PC-9 (cell line): ENCODE measurements at regions of chr14 and their contacts with region 1.

Region 1: DNA sequence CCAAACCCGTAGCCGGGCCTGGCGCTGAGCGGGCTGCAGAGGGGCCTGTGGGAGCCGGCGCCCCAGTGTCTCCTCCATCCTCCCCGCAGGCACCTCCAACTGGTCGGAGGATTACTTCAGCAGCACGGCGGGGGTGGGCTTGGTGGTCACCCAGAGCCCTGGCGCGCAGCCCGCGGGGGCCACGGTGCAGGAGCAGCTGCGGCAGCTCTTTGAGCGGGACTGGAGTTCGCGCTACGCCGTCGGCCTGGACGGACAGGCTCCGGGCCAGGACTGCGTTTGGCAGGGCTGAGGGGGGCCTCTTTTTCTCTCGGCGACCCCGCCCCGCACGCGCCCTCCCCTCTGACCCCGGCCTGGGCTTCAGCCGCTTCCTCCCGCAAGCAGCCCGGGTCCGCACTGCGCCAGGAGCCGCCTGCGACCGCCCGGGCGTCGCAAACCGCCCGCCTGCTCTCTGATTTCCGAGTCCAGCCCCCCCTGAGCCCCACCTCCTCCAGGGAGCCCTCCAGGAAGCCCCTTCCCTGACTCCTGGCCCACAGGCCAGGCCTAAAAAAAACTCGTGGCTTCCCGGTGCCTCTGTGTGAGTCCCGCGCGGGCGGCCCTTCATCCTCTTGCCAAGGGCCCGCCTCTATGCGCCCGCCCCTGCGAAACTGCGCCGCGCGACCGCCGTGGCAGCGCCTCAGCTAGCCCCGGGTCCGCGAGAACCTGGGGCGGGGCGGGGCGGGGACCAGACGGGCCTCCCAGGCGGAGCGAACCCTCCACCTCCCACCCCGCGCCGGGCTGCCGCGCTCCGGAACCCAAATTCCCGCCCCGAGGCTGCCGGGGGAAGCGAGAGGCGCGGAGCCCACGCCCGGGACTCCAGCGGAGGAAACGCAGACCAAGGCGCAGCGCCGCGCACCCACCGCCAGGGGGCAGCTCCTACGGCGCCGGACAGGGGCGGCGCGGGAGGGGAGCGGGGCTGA is 8.3 kb downstream of the PLD4 start:
- DNase-seq: peak; percentile 38 to 77
- H3K4me3 ChIP-seq: peak overlapping the region; percentile 71
- H3K27ac ChIP-seq: no peak overlapping the region
- H3K4me1 ChIP-seq: no peaks in the 10 kb centered on the region
- H3K27me3 ChIP-seq: peaks cover 21% of the 10 kb centered on the region; the same call in 1 of the 2 replicates
- CTCF ChIP-seq: peak; percentile 69

Region 2: DNA sequence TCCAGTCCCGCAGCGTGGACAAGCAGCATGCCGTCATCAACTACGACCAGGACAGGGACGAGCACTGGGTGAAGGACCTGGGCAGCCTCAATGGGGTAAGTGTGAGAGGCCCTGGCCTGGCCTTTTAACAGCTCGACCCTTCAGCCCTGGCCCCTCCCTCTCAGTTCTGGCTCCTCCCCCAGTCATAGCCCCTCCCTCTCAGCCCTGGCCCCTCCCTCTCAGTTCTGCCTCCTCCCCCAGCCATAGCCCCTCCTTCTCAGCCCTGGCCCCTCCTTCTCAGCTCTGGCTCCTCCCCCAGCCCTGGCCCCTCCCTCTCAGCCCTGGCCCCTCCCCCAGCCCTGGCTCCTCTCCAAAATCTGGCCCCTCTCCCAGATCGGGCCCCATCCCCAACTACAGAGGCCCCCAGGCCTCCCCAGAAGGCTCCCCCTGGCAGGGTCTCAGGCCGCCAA is 56.7 kb before region 1 on chr14:
- CTCF ChIA-PET with region 1: no interaction called
- POLR2A ChIA-PET with region 1: no interaction called
- intact Hi-C with region 1: no loop called
- DNase-seq: no peak
- H3K4me3 ChIP-seq: no peak overlapping the region
- H3K27ac ChIP-seq: no peak overlapping the region
- H3K4me1 ChIP-seq: no peaks in the 10 kb centered on the region
- H3K27me3 ChIP-seq: no peaks in the 10 kb centered on the region
- CTCF ChIP-seq: no peak

Region 3: DNA sequence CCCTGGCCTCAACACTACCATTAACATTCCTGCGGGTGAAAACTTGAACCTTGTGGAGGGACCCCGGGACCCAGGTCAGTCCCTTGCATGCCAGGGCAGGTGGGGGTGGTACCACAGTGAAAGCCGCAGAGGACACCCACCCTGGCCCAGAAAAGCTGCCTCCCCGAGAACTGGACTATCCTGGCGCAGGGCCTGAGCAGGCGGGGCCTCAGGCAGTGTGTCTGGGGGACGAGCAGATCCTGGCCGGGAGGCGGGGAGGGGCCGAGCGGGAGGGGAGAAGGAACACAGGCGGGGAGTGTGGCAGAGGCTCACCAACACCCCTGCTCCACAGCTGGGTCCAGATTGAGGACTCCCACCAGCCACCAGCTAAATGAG is 35.2 kb after region 1 on chr14:
- CTCF ChIA-PET with region 1: interaction called, 3 read pairs
- POLR2A ChIA-PET with region 1: interaction called, 5 read pairs
- intact Hi-C with region 1: loop called (anchors 5 kb)
- DNase-seq: peak in 1 of 2 experiments; percentile 76
- H3K4me3 ChIP-seq: no peak overlapping the region
- H3K27ac ChIP-seq: no peak overlapping the region
- H3K4me1 ChIP-seq: peaks cover 48% of the 10 kb centered on the region
- H3K27me3 ChIP-seq: no peaks in the 10 kb centered on the region
- CTCF ChIP-seq: no peak